Left cardiac atrium (tissue), 4 donors: ENCODE measurements at regions of chr4 and their contacts with region 1.

Region 1: DNA sequence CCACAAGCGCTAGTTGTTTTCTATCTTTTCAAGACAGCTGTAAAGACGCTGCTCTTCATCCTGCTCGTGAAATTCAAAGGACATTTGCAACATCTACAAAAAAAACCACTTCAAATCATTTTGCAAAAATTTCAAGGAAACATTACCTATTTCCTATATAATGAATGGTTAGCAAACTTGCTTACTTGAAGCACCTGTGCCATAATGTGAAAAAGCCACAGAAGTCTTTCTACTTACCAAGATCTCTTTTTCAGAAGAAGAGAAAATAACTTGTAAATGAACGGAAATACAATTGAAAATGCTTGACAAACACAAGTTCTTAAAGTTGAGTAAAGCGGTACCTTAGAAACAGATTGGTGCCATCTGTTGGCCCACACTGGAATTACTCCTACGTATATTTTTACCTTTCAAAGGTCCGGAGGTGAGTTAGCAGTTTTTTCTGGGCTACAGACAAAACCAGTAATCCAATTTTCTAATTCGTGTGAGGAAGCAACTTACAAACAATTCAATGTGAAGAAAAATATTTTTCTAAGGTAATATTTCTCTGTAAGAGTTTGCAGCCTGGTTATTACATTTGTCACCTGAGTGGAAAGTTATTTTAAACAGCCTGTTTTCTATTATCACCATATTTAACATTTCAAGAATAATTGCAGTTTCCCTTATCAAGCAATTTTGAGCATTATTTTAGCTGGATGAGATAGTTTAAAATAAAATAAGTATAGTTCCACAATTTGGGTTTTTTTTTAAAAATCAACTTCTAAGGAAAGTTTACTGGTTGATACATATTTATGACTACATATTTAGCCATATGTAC is at the start of gene TLR6:
- DNase-seq: no peak
- ATAC-seq: peak; percentile 59 to 63
- total RNA-seq, gene TLR6: 2.7 to 3.2 TPM

Region 2: DNA sequence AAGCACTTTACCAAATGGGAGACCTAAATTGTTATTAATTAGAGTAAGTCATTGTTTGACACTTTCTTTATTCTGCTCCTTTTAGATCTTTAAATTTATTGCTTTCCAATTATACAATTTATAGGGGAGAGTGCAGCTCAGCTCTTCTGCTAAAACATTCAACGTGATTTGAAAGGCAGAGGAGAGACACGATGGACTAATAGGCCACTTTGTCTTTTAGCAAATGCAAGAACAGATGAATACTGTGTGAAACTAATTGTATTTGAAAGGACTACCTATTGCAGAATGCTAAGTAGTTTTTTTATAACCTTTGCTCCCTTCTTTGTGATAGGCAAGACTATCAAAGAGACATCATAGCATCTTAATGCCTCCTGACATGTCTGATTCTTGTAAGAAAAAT is 513.1 kb before region 1 on chr4:
- intact Hi-C with region 1: no loop called
- DNase-seq: no peak
- ATAC-seq: no peak

Region 3: DNA sequence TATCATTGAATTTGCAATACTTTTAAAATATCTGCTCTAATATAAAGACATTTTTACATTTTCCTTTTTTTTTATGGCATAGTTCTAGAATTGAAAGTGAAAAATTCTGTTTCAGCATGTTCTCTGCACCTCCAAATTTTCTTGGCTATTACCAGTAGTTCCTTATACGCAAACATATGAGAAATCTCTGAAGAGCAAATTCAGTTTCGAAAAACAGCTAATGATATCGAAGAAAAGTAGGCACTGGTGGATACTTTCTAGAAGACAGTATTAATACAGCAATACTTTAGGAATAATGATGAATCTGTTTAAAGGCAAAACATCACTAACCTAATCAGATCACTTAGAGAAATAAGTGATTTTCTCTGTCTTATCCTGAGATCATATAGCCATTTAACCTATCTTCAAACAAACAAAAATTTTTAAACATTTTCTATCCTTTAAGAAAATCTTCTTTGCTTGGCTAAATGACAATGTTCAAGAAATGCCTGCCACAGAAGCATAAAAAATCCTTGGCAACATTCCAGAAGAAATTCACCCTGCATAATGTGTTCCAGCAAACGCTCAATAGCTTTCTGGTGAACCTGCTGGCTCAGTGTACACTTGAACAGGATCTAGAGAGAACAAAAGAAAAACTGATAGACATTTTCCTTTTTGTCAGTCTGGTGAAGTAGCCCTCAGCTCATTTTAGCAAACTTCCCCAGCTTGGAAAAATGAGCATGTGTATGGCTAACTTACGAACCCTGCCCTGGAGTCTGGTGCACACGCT is 243.9 kb before region 1 on chr4:
- intact Hi-C with region 1: no loop called
- DNase-seq: no peak
- ATAC-seq: peak in 1 of 2 donors; percentile 22

Region 4: GRCh38 chr4:38759113-38759789 is 97.5 kb before region 1 on chr4:
- intact Hi-C with region 1: loop called in 1 of 2 experiments (anchors 5 kb)
- DNase-seq: peak; percentile 62
- ATAC-seq: peak; percentile 89 to 90

Region 5: DNA sequence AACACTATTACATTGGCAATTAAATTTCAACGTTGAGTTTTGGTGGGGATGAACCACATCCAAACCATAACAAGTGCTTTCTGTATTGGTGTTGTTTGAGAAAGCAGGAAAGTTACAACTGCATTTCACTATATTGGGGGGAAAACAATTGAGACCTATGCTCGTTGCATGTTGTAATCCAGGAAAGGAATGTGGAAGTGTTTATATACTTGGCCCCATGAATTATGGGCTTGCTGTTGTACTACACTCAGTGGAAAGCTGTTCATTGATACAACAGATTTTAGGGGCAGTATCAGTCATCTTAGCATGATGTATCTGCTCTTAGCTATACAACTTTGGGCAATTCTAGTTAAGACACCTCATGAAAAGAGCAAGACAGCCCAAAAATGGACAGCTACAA is 257.7 kb after region 1 on chr4:
- intact Hi-C with region 1: no loop called
- DNase-seq: no peak
- ATAC-seq: no peak

Region 6: GRCh38 chr4:39786838-39787237 is 930.1 kb after region 1 on chr4:
- intact Hi-C with region 1: no loop called
- DNase-seq: no peak
- ATAC-seq: no peak